ENCODE measurements at regions of chr7 and their contacts with region 1.

Region 1: GRCh38 chr7:20219446-20220292 is 2.5 kb upstream of the MACC1 start:
- DNase-seq: peak; percentile 99
- ATAC-seq: peak; percentile 72
- H3K4me3 ChIP-seq: peak overlapping the region; percentile 44; the same call in 1 of the 2 replicates
- H3K27ac ChIP-seq: peak overlapping the region; percentile 98
- H3K4me1 ChIP-seq: peaks cover 35% of the 10 kb centered on the region
- H3K27me3 ChIP-seq: no peaks in the 10 kb centered on the region
- CTCF ChIP-seq: peak in 1 of 3 experiments; percentile 14; a peak in 1 of 6 replicates
- EP300 ChIP-seq: peak; percentile 99 to 100
- POLR2A ChIP-seq: peak; percentile 74
- RAD21 ChIP-seq: peak; percentile 19; the same call in 1 of the 2 replicates

Region 2: DNA sequence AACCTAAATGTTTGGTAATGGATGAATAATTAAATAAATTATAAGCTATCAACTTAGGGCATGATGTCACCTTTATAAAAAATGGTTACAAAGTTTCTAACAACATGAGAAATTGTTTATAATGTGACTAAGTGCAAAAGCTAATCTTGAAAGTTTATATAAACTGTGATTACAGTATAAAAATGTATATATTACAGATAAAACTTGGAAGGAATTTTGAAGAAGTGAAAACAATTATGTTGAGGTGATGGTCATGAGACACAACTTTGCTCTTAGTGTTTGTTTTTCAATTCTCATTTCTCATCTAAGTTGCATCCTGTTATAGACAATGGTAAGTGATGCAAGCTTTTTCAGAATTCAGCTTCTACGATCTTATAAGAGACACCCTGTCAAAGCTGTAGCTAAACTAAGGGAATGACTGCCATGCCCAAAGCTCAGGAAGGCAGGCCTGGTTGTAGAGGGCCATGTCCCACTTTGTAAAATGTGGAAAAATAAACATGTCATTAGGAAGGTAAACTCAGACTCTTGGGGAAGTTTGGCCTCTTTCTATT is 26.4 kb before region 1 on chr7:
- CTCF ChIA-PET with region 1: interaction called, 33 read pairs
- POLR2A ChIA-PET with region 1: interaction called, 12 read pairs
- RAD21 ChIA-PET with region 1: interaction called, 44 read pairs
- SMC1A ChIA-PET with region 1: interaction called, 44 read pairs
- in situ Hi-C with region 1: no loop called
- intact Hi-C with region 1: no loop called
- DNase-seq: no peak
- ATAC-seq: peak; percentile 83
- H3K4me3 ChIP-seq: no peak overlapping the region
- H3K27ac ChIP-seq: peak overlapping the region; percentile 63
- H3K4me1 ChIP-seq: peaks cover 24% of the 10 kb centered on the region
- H3K27me3 ChIP-seq: no peaks in the 10 kb centered on the region
- CTCF ChIP-seq: no peak
- EP300 ChIP-seq: peak; percentile 48 to 58; a peak in 2 of 4 replicates
- POLR2A ChIP-seq: no peak
- RAD21 ChIP-seq: no peak

Region 3: GRCh38 chr7:20229646-20230500 is 10.2 kb after region 1 on chr7:
- CTCF ChIA-PET with region 1: interaction called, 159 read pairs
- POLR2A ChIA-PET with region 1: interaction called, 151 read pairs
- RAD21 ChIA-PET with region 1: interaction called, 230 read pairs
- SMC1A ChIA-PET with region 1: interaction called, 474 read pairs
- in situ Hi-C with region 1: no loop called
- intact Hi-C with region 1: no loop called
- DNase-seq: no peak
- ATAC-seq: no peak
- H3K4me3 ChIP-seq: no peak overlapping the region
- H3K27ac ChIP-seq: no peak overlapping the region
- H3K4me1 ChIP-seq: peaks cover 9% of the 10 kb centered on the region
- H3K27me3 ChIP-seq: no peaks in the 10 kb centered on the region
- CTCF ChIP-seq: no peak
- EP300 ChIP-seq: no peak
- POLR2A ChIP-seq: no peak
- RAD21 ChIP-seq: no peak

Region 4: GRCh38 chr7:20280475-20281351 is 61.0 kb after region 1 on chr7:
- CTCF ChIA-PET with region 1: interaction called, 3 read pairs
- POLR2A ChIA-PET with region 1: interaction called, 19 read pairs
- RAD21 ChIA-PET with region 1: interaction called, 45 read pairs
- SMC1A ChIA-PET with region 1: interaction called, 40 read pairs
- in situ Hi-C with region 1: loop called (anchors 5 kb)
- intact Hi-C with region 1: loop called (anchors 1 kb)
- DNase-seq: no peak
- ATAC-seq: peak; percentile 23
- H3K4me3 ChIP-seq: no peak overlapping the region
- H3K27ac ChIP-seq: no peak overlapping the region
- H3K4me1 ChIP-seq: peaks cover 11% of the 10 kb centered on the region; the same call in 1 of the 2 replicates
- H3K27me3 ChIP-seq: no peaks in the 10 kb centered on the region
- CTCF ChIP-seq: no peak
- EP300 ChIP-seq: no peak
- POLR2A ChIP-seq: no peak
- RAD21 ChIP-seq: no peak

Region 5: DNA sequence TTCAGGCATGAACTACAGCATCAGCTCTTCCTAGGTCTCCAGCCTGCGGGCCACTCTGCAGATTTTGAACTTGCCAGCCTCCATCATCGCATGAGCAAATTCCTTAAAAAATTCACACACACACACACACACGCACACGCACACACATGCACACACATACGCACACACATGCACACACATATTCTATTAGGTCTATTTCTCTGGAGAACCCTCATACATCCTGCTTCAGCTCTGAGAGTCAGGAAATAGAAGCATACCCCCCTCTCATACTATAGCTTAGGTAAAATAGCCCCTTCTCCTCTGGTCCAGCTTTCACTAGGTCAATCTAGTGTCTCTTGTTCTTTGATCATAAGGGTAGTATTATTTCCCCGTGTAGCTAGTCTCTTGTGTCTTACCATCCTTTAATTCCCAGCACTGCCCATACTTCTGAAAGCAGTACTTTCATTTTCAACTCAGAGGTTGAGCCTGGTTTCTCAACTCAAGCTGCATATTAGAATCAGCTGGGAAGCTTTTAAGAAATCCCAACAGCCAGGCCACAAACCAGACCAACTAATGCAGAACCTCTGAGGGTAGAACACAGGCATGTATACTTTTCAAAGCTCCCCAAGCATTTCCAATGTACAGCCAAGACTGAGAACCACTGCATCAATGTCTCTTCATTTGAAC is 80.1 kb after region 1 on chr7:
- CTCF ChIA-PET with region 1: interaction called, 17 read pairs
- POLR2A ChIA-PET with region 1: interaction called, 35 read pairs
- RAD21 ChIA-PET with region 1: interaction called, 73 read pairs
- SMC1A ChIA-PET with region 1: interaction called, 59 read pairs
- in situ Hi-C with region 1: no loop called
- intact Hi-C with region 1: loop called (anchors 1 kb)
- DNase-seq: peak; percentile 83
- ATAC-seq: peak; percentile 70
- H3K4me3 ChIP-seq: no peak overlapping the region
- H3K27ac ChIP-seq: peak overlapping the region; percentile 76
- H3K4me1 ChIP-seq: peaks cover 16% of the 10 kb centered on the region
- H3K27me3 ChIP-seq: no peaks in the 10 kb centered on the region
- CTCF ChIP-seq: no peak
- EP300 ChIP-seq: no peak
- POLR2A ChIP-seq: no peak
- RAD21 ChIP-seq: no peak

Region 6: DNA sequence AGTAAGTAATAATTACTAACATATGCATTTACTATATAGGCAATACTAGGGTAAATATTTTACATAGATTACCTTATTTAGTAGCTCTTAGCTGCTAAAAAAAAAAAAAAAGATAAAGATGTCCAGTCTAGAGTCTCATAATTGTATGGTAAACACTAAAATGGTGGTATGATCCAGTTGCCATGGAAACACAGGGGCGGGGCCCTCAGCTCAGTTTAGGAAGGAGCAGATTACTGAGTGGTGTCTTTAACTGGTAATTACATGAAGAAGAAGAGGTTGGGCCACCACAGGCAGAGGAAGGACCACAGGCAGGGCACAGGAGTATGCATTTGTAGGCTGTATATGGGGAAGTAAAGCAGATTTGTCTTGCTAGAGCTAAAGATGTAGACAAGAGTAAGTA is 154.7 kb after region 1 on chr7:
- CTCF ChIA-PET with region 1: no interaction called
- POLR2A ChIA-PET with region 1: no interaction called
- RAD21 ChIA-PET with region 1: no interaction called
- SMC1A ChIA-PET with region 1: no interaction called
- in situ Hi-C with region 1: no loop called
- intact Hi-C with region 1: no loop called
- DNase-seq: no peak
- ATAC-seq: peak; percentile 41
- H3K4me3 ChIP-seq: no peak overlapping the region
- H3K27ac ChIP-seq: no peak overlapping the region
- H3K4me1 ChIP-seq: no peaks in the 10 kb centered on the region
- H3K27me3 ChIP-seq: no peaks in the 10 kb centered on the region
- CTCF ChIP-seq: no peak
- EP300 ChIP-seq: no peak
- POLR2A ChIP-seq: no peak
- RAD21 ChIP-seq: no peak

Measured in GM12878 (cell line).